ENCODE measurements at regions of chr19 and their contacts with region 1.

Region 1: GRCh38 chr19:3365836-3366752 is at the start of gene NFIC:
- DNase-seq: peak; percentile 96
- H3K4me3 ChIP-seq: peak within 1 kb of the TSS; percentile 64 to 99 (median 89)
- H3K27ac ChIP-seq: peak within 1 kb of the TSS; percentile 98 to 100 (median 100)
- H3K4me1 ChIP-seq: peaks cover 43 to 85% (median 73%) of the 10 kb centered on the region in 4 donors
- H3K27me3 ChIP-seq: no peaks in the 10 kb centered on the region
- CTCF ChIP-seq: no peak
- EP300 ChIP-seq: peak; percentile 76
- POLR2A ChIP-seq: no peak
- total RNA-seq, gene NFIC: 165 to 297 (median 211) TPM

Region 2: GRCh38 chr19:3243819-3244700 is 122.0 kb before region 1 on chr19:
- intact Hi-C with region 1: no loop called
- DNase-seq: no peak
- H3K4me3 ChIP-seq: no peak overlapping the region
- H3K27ac ChIP-seq: no peak overlapping the region
- H3K4me1 ChIP-seq: no peaks in the 10 kb centered on the region
- H3K27me3 ChIP-seq: peaks cover 0 to 54% (median 0%) of the 10 kb centered on the region in 4 donors
- CTCF ChIP-seq: no peak
- EP300 ChIP-seq: no peak
- POLR2A ChIP-seq: no peak

Region 3: GRCh38 chr19:3275583-3276340 is 90.3 kb before region 1 on chr19:
- intact Hi-C with region 1: no loop called
- DNase-seq: no peak
- H3K4me3 ChIP-seq: peak overlapping the region; percentile 40 to 53 (median 45)
- H3K27ac ChIP-seq: no peak overlapping the region
- H3K4me1 ChIP-seq: peaks cover 3 to 18% (median 16%) of the 10 kb centered on the region in 4 donors
- H3K27me3 ChIP-seq: peaks cover 0 to 100% (median 27%) of the 10 kb centered on the region in 4 donors
- CTCF ChIP-seq: no peak
- EP300 ChIP-seq: no peak
- POLR2A ChIP-seq: no peak

Region 4: DNA sequence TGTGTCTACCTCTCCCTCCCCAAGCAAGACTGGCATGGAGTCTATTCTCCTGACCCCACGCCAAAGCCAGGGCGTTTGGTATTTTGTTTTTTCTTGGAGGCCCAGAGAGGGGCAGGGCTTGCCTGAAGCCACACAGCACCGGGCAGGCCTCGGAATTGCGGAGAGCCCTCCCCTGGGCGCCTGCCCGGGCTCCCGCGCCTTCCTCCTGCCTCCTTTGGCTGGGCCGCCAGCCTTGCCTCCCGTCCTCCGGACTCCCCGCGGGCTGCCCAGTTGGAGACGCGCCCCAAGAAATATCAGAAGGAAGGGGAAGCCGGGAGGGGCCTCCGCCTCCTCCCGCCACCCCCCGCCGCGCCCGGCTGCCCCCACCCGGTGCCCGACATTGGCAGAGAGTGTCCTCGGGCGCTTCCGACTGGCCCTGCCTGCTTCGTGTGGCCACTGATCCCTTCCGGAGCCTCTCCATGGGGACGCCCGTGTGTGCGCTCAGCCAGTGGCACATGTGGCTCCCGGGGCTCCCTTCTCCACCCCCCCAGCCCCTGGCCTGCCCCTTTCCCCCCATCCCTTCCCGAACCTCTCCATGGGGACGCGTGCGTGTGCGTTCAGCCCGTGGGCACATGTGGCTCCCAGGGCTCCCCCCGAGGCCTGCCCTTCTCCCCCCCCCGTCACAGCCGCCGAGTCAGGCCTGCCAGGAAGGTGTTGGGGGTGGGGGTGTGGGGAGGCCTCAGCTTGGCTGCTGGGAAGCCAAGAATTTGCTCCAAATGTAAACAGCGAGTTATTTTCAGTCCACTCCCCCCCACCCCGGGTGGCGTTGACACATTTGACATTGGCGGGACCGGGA is 37.6 kb after region 1 on chr19:
- intact Hi-C with region 1: loop called (anchors 5 kb)
- DNase-seq: peak; percentile 98
- H3K4me3 ChIP-seq: peak overlapping the region; percentile 51 to 61 (median 56)
- H3K27ac ChIP-seq: peak overlapping the region; percentile 95 to 100 (median 99)
- H3K4me1 ChIP-seq: peaks cover 70 to 100% (median 99%) of the 10 kb centered on the region in 4 donors
- H3K27me3 ChIP-seq: no peaks in the 10 kb centered on the region
- CTCF ChIP-seq: no peak
- EP300 ChIP-seq: peak; percentile 99
- POLR2A ChIP-seq: no peak

Region 5: GRCh38 chr19:3429581-3430080 is 63.5 kb after region 1 on chr19:
- intact Hi-C with region 1: loop called (anchors 10 kb)
- DNase-seq: peak; percentile 99
- H3K4me3 ChIP-seq: peak overlapping the region in 2 of 4 donors; percentile 4 to 16
- H3K27ac ChIP-seq: peak overlapping the region; percentile 93 to 97 (median 96)
- H3K4me1 ChIP-seq: peaks cover 59 to 100% (median 98%) of the 10 kb centered on the region in 4 donors
- H3K27me3 ChIP-seq: no peaks in the 10 kb centered on the region
- CTCF ChIP-seq: peak; percentile 99 to 100 (median 100)
- EP300 ChIP-seq: peak; percentile 100
- POLR2A ChIP-seq: no peak

Measured in esophagus muscularis mucosa (tissue), 4 donors.